Activated naive CD4-positive, alpha-beta T cell treated with anti-CD3 and anti-CD28 coated beads, Interleukin-2, amount 10 ng/mL, durations not matched to agents 7 days and 5 days (primary cell): ENCODE measurements at regions of chr2 and their contacts with region 1.

Region 1: DNA sequence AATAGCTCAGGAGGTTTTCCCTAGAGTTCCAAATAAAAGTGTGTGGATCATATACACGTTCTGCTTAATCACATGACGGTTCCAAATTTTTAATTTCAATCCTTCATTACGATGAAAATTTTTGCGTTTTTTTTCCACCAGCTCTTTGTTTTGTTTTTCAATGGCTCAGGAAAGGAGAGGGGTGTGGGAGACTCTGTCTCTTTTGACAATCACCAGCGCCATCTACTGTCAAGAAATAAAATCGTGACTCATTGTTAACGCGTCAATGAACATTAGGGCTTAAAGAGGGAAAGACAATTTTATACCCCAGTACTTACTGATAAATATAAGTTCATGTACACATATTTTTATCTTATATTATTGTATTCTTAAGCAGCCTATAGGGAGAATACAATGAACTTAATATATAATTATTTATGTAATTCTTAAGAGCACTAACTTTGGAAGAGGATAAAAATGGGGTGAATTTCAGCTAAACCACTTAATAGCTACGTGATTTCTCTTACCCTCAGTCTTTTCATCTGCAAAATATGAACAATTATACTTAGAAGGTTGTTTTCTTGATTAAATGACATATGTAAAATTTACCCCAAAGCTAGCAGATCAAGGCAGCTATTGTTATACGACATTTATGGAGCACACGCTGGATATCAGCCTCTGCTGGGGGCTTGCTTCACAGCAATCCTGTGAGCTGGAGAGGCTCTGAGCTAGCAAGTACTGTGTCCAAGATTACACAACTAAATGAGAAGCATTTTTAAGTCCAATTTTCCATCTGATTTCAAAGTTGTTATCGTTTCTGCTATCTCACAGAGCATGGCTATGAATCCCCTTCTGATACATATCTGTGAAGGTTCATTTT is 47.4 kb upstream of the RMDN2 start:
- DNase-seq: peak; percentile 40
- H3K4me3 Mint-ChIP-seq: no peak overlapping the region
- H3K27ac Mint-ChIP-seq: no peak overlapping the region
- H3K4me1 Mint-ChIP-seq: peaks cover 2% of the 10 kb centered on the region
- H3K27me3 Mint-ChIP-seq: peaks cover 25% of the 10 kb centered on the region

Region 2: DNA sequence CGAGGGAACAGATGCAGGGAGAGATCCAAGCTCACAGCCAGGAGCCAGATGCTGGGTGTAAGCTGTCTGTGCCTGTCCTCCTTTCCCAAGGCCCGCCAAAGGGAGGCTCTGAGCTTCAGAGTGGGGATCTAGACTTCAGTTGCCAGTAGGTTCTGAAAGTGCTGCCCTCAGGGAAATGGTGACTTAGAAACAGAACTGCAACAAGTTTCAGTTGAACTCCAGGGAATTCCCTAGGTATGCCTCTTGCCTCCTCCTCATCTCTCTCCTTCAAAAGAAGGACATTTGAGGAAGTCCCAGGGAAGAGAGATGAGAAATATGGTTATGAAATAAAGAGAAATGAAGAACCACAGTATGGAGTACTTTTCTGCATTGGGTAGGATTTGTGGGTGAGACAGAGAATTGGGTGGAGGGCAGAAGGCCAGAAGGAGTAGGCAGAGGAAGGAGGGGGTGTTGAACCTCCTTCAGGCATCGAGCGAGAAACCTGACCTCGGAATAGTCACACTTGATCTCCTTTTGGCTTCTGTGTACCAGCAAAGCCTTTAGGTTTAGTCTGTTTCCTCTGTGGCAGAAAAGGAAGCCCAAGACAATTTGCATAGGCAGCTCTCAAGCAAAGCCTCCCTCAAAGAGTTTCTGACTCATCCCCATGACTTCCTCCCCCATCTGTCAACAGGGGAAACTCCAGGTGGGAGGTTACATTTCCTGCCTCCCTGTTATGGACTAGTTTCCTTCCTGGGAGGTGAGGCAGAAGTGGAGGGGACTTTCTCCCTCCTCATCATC is 487.5 kb before region 1 on chr2:
- CTCF ChIA-PET with region 1: interaction called, 107 read pairs
- DNase-seq: peak; percentile 70
- H3K4me3 Mint-ChIP-seq: no peak overlapping the region
- H3K27ac Mint-ChIP-seq: peak overlapping the region; percentile 81
- H3K4me1 Mint-ChIP-seq: no peaks in the 10 kb centered on the region
- H3K27me3 Mint-ChIP-seq: peaks cover 23% of the 10 kb centered on the region

Region 3: DNA sequence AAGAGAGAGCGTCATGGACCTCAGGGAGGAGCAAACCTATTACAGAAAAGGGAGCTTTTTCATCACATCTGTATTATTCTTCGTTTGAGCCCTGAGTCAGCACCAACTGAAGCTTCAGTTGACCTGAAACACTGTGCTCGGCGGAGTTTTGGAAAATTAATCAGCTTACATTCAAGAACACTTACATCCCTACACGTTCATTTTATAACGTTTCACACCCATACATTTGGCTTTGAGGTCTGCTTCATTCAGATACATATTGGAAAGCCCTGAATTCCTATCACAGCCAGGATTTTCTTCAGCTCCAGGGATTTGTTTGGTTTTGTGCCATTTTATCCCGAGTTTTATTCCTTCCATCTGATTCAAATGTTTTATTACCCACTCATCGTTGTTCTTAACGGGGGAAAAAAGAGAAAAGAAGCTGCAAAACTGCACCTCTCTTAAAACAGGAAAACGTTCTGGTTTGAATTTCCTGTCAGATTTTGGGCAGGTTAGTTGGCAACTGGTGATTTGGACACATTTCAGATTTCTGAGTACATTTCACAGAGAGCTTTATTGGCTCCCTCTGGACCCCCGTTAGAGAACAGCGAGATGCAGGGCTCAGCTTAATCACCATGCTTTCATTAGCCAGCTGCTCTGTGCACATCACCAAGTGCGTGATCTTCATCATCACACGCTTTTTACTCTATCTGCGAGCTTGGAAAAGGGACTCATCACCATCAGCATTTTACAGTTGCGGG is 295.0 kb before region 1 on chr2:
- CTCF ChIA-PET with region 1: interaction called, 10 read pairs
- DNase-seq: no peak
- H3K4me3 Mint-ChIP-seq: peak overlapping the region; percentile 4
- H3K27ac Mint-ChIP-seq: peak overlapping the region; percentile 77
- H3K4me1 Mint-ChIP-seq: peaks cover 57% of the 10 kb centered on the region
- H3K27me3 Mint-ChIP-seq: no peaks in the 10 kb centered on the region

Region 4: GRCh38 chr2:37837628-37838328 is 39.9 kb before region 1 on chr2:
- CTCF ChIA-PET with region 1: interaction called, 33 read pairs
- DNase-seq: no peak
- H3K4me3 Mint-ChIP-seq: no peak overlapping the region
- H3K27ac Mint-ChIP-seq: no peak overlapping the region
- H3K4me1 Mint-ChIP-seq: peaks cover 17% of the 10 kb centered on the region
- H3K27me3 Mint-ChIP-seq: peaks cover 18% of the 10 kb centered on the region

Region 5: GRCh38 chr2:37890893-37891495 is 13.3 kb after region 1 on chr2:
- CTCF ChIA-PET with region 1: interaction called, 14 read pairs
- DNase-seq: peak; percentile 70
- H3K4me3 Mint-ChIP-seq: no peak overlapping the region
- H3K27ac Mint-ChIP-seq: no peak overlapping the region
- H3K4me1 Mint-ChIP-seq: peaks cover 47% of the 10 kb centered on the region
- H3K27me3 Mint-ChIP-seq: peaks cover 32% of the 10 kb centered on the region

Region 6: GRCh38 chr2:37934591-37935513 is 57.2 kb after region 1 on chr2:
- CTCF ChIA-PET with region 1: no interaction called
- DNase-seq: no peak
- H3K4me3 Mint-ChIP-seq: peak overlapping the region; percentile 64
- H3K27ac Mint-ChIP-seq: peak overlapping the region; percentile 63
- H3K4me1 Mint-ChIP-seq: peaks cover 30% of the 10 kb centered on the region
- H3K27me3 Mint-ChIP-seq: peaks cover 17% of the 10 kb centered on the region